ENCODE measurements at regions of chr11 and their contacts with region 1.

Region 1: DNA sequence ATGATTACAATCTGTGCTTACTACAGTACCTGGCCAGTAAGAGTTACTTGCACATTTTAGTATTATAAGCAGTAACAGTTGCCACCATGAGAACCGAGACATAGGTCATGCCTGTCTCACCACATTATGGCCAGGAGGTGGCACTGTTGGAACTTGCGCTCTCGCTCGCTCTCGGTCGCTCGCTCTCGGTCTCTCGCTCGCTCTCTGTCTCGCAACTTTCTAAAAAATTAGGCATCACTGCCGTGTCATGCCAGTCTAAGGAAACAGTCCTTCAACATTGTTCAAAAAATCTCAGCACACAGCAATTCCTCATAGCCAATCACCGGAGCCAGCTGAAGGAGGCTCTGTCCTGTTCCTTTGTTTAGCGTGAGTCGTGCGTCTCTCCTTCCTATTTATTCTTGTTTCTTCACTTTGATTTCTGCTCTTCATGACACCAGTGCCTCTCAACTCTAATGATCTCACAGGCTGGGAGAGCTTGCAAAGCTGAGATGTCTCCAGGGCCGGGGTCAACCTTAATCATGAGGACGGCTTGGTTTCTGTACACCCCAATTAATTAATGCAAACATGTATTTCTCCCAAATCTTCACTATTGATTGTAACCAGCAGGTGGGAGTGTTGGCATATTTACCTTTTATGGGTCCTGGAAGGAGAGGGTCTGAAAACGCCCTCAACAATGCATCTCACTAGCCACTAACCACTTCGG is 6.3 kb upstream of the ADAMTS8 start:
- DNase-seq: peak; percentile 82
- ATAC-seq: peak; percentile 83
- H3K4me3 Mint-ChIP-seq: no peak overlapping the region
- H3K27ac Mint-ChIP-seq: no peak overlapping the region
- H3K4me1 Mint-ChIP-seq: peaks cover 10% of the 10 kb centered on the region
- H3K27me3 Mint-ChIP-seq: peaks cover 11% of the 10 kb centered on the region

Region 2: GRCh38 chr11:129643031-129643721 is 791.5 kb before region 1 on chr11:
- CTCF ChIA-PET with region 1: no interaction called
- POLR2A ChIA-PET with region 1: no interaction called
- intact Hi-C with region 1: no loop called
- DNase-seq: peak; percentile 51
- ATAC-seq: peak; percentile 69
- H3K4me3 Mint-ChIP-seq: no peak overlapping the region
- H3K27ac Mint-ChIP-seq: peak overlapping the region; percentile 85
- H3K4me1 Mint-ChIP-seq: peaks cover 72% of the 10 kb centered on the region
- H3K27me3 Mint-ChIP-seq: peaks cover 14% of the 10 kb centered on the region

Region 3: DNA sequence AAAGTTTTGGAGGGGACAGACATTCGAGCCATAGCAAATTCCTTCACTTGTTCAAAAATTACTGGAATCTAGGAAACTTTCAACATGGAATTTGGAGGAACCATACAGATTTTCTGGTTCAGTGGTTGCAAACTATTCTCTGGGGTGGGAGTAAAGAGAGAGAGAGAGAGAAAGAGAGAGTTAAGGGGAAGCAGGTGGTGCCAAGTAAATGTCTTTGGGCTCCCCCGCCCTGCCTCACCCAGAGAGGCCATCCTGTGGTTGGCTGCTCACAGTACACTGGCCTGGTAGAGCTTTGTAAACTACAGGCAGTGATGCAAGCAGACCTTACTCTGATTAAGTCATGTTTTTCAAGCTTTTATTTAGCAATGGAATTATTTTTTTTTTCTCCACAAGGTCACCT is 96.4 kb after region 1 on chr11:
- CTCF ChIA-PET with region 1: interaction called, 8 read pairs
- POLR2A ChIA-PET with region 1: no interaction called
- intact Hi-C with region 1: loop called in 1 of 2 experiments (anchors 5 kb)
- DNase-seq: no peak
- ATAC-seq: no peak
- H3K4me3 Mint-ChIP-seq: no peak overlapping the region
- H3K27ac Mint-ChIP-seq: no peak overlapping the region
- H3K4me1 Mint-ChIP-seq: no peaks in the 10 kb centered on the region
- H3K27me3 Mint-ChIP-seq: peaks cover 1% of the 10 kb centered on the region

Region 4: GRCh38 chr11:130827451-130828377 is 393.0 kb after region 1 on chr11:
- CTCF ChIA-PET with region 1: interaction called, 3 read pairs
- POLR2A ChIA-PET with region 1: no interaction called
- intact Hi-C with region 1: loop called in 1 of 2 experiments (anchors 1 kb)
- DNase-seq: peak; percentile 54
- ATAC-seq: peak; percentile 87
- H3K4me3 Mint-ChIP-seq: no peak overlapping the region
- H3K27ac Mint-ChIP-seq: no peak overlapping the region
- H3K4me1 Mint-ChIP-seq: no peaks in the 10 kb centered on the region
- H3K27me3 Mint-ChIP-seq: peaks cover 3% of the 10 kb centered on the region

Region 5: DNA sequence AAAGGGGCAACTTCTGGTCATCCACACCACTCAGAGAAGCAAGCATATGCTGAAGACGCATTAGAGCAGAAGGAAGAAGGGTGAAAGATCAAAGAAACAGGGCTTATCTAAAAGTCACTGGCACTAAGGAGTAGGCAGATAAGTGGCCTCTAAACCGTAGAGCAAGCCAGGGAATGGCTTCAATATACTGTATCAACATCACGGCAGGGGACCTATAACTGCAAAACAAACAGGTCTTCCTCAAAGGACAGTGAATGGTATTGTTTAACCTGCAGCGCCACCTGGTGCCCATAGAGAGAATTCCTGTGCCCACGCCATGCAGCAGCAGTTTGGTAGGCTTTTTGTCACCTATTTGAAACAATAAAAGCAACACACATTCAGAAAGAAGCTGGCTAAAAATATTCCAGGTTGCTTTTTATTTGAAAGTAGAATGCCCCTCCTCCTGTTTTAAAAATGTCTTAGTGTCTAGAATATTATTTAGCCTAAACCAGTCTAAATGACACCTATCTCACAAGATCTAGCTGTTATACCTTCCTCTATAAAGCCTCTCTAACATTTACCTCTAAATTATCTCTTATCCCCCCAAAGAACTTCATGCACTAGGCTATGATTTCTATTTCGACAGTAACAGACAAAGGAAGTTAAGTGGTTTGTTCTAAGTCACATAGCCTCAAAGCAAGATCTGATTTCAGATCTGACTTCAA is 459.8 kb after region 1 on chr11:
- CTCF ChIA-PET with region 1: interaction called, 23 read pairs
- POLR2A ChIA-PET with region 1: no interaction called
- intact Hi-C with region 1: loop called (anchors 1 kb)
- DNase-seq: peak; percentile 76
- ATAC-seq: peak; percentile 92
- H3K4me3 Mint-ChIP-seq: no peak overlapping the region
- H3K27ac Mint-ChIP-seq: peak overlapping the region; percentile 6
- H3K4me1 Mint-ChIP-seq: peaks cover 12% of the 10 kb centered on the region
- H3K27me3 Mint-ChIP-seq: no peaks in the 10 kb centered on the region

Region 6: DNA sequence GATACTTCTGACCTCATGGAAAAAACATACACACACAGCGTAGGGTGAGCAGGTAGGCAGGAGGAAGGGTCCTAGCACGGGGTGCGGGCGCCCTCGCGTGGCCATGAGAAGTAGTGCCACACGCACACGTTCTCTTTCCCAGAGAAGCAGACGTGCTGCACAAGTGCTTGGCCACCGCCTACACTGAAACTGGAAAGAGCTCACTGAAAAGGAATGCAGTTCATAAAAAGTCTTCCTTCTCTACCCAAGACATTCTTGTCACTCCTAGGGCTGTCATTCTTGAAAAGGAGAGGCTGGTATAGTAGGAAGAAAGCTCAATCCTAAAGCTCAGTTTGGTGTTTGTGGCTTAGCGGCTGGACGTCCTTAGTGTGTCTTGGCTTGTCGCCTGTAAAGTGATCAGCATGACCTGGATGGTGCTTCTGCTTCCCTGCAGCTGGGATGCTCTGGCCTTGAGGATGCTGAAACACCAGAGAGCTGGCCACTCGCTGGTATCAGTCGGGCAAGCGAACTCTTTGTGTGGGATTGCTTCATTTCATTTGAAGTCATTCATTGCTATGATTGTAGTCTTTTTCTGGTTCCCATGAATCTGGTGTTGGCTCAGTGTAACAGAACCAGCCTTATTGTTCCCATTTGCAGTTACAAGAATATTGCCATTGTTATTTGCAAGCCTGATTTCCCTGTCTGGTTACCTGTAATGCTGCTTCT is 1239.5 kb after region 1 on chr11:
- CTCF ChIA-PET with region 1: no interaction called
- POLR2A ChIA-PET with region 1: no interaction called
- intact Hi-C with region 1: loop called in 1 of 2 experiments (anchors 5 kb)
- DNase-seq: peak; percentile 79
- ATAC-seq: peak; percentile 42
- H3K4me3 Mint-ChIP-seq: no peak overlapping the region
- H3K27ac Mint-ChIP-seq: no peak overlapping the region
- H3K4me1 Mint-ChIP-seq: no peaks in the 10 kb centered on the region
- H3K27me3 Mint-ChIP-seq: peaks cover 2% of the 10 kb centered on the region